ENCODE measurements at regions of chr20 and their contacts with region 1.

Region 1: DNA sequence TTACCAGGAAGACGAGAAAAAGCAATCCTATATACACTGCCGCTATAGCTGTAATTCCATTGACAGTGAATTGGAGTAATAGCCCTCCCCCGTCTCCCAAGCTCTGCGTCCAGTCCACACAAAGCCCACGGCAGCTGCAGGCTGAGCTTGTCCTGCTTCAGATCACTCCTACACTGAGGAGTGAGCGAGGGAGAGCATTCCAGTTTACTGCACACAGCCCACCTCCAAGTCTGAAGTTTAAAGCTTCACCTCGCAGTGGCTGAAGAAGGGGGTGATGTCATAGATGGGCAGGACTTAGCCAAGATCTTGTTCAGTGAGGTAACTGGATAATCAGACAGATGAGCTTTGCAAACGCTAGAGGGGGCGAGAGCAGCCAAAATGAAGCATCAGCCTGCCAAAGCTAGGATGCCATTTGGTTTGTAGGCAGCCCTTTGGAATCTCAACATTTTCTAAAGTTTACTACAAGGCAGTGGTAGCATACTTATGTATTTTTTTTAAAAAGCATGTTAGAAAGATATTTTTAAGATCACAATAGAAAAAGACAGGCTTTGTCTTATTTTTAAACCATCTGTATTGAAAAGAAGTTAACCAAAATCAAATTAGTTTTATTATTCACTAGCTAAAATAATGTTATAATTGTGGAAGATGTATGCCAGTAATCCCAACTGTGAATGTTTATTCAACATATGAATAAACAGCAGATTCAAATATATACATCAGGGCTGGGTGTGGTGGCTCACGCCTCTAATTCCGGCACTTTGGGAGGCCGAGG is at the start of gene FLRT3:
- DNase-seq: peak; percentile 83
- ATAC-seq: peak; percentile 99
- H3K4me3 ChIP-seq: peak within 1 kb of the TSS; percentile 43 to 55
- H3K27ac ChIP-seq: no peak within 1 kb of the TSS
- H3K4me1 ChIP-seq: peaks cover 0 to 5% of the 10 kb centered on the region in 2 experiments; a peak in 1 of 4 replicates
- H3K27me3 ChIP-seq: no peaks in the 10 kb centered on the region
- CTCF ChIP-seq: peak; percentile 36 to 70 (median 70); a peak in 5 of 6 replicates
- POLR2A ChIP-seq: no peak
- RAD21 ChIP-seq: peak; percentile 80
- total RNA-seq, gene FLRT3: 1.5 TPM

Region 2: DNA sequence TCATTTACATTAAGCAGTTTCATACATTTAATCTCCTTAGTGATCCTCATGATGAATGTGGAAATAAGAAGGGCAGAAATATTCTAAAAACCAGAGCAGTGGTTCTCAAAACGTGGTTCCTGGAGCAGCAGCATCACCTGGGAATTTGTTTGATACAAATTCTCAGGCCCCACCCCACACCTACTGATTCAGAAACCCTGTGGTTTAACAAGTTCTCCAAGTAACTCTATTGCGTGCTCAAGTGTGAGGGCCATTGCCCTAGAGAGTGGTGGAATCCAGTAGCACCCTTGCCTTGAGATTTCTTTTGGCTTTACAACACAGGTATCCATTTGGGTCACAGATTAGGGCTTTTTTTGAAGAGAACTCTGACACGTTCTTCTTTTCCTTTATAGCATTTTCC is 354.4 kb after region 1 on chr20:
- CTCF ChIA-PET with region 1: no interaction called
- POLR2A ChIA-PET with region 1: no interaction called
- RAD21 ChIA-PET with region 1: no interaction called
- intact Hi-C with region 1: no loop called
- DNase-seq: no peak
- ATAC-seq: no peak
- H3K4me3 ChIP-seq: no peak overlapping the region
- H3K27ac ChIP-seq: no peak overlapping the region
- H3K4me1 ChIP-seq: no peaks in the 10 kb centered on the region
- H3K27me3 ChIP-seq: no peaks in the 10 kb centered on the region
- CTCF ChIP-seq: no peak
- POLR2A ChIP-seq: no peak
- RAD21 ChIP-seq: no peak

Region 3: GRCh38 chr20:14712302-14712739 is 374.7 kb after region 1 on chr20:
- CTCF ChIA-PET with region 1: no interaction called
- POLR2A ChIA-PET with region 1: no interaction called
- RAD21 ChIA-PET with region 1: no interaction called
- intact Hi-C with region 1: loop called (anchors 10 kb)
- DNase-seq: no peak
- ATAC-seq: no peak
- H3K4me3 ChIP-seq: no peak overlapping the region
- H3K27ac ChIP-seq: no peak overlapping the region
- H3K4me1 ChIP-seq: no peaks in the 10 kb centered on the region
- H3K27me3 ChIP-seq: no peaks in the 10 kb centered on the region
- CTCF ChIP-seq: no peak
- POLR2A ChIP-seq: no peak
- RAD21 ChIP-seq: no peak

Region 4: GRCh38 chr20:14948423-14948822 is 610.8 kb after region 1 on chr20:
- CTCF ChIA-PET with region 1: no interaction called
- POLR2A ChIA-PET with region 1: no interaction called
- RAD21 ChIA-PET with region 1: no interaction called
- intact Hi-C with region 1: loop called (anchors 10 kb)
- DNase-seq: no peak
- ATAC-seq: peak; percentile 69
- H3K4me3 ChIP-seq: no peak overlapping the region
- H3K27ac ChIP-seq: no peak overlapping the region
- H3K4me1 ChIP-seq: peaks cover 2 to 10% of the 10 kb centered on the region in 2 experiments; a peak in 2 of 4 replicates
- H3K27me3 ChIP-seq: no peaks in the 10 kb centered on the region
- CTCF ChIP-seq: peak in 2 of 3 experiments; percentile 40 to 48; a peak in 4 of 6 replicates
- POLR2A ChIP-seq: no peak
- RAD21 ChIP-seq: peak; percentile 39; the same call in 1 of the 2 replicates

Region 5: GRCh38 chr20:15236812-15237211 is 899.2 kb after region 1 on chr20:
- CTCF ChIA-PET with region 1: no interaction called
- POLR2A ChIA-PET with region 1: no interaction called
- RAD21 ChIA-PET with region 1: no interaction called
- intact Hi-C with region 1: loop called (anchors 1 kb)
- DNase-seq: peak; percentile 45
- ATAC-seq: peak; percentile 92
- H3K4me3 ChIP-seq: no peak overlapping the region
- H3K27ac ChIP-seq: no peak overlapping the region
- H3K4me1 ChIP-seq: no peaks in the 10 kb centered on the region
- H3K27me3 ChIP-seq: no peaks in the 10 kb centered on the region
- CTCF ChIP-seq: peak; percentile 31 to 66 (median 62); a peak in 5 of 6 replicates
- POLR2A ChIP-seq: no peak
- RAD21 ChIP-seq: peak; percentile 55